ENCODE measurements at regions of chr5 and their contacts with region 1.

Region 1: DNA sequence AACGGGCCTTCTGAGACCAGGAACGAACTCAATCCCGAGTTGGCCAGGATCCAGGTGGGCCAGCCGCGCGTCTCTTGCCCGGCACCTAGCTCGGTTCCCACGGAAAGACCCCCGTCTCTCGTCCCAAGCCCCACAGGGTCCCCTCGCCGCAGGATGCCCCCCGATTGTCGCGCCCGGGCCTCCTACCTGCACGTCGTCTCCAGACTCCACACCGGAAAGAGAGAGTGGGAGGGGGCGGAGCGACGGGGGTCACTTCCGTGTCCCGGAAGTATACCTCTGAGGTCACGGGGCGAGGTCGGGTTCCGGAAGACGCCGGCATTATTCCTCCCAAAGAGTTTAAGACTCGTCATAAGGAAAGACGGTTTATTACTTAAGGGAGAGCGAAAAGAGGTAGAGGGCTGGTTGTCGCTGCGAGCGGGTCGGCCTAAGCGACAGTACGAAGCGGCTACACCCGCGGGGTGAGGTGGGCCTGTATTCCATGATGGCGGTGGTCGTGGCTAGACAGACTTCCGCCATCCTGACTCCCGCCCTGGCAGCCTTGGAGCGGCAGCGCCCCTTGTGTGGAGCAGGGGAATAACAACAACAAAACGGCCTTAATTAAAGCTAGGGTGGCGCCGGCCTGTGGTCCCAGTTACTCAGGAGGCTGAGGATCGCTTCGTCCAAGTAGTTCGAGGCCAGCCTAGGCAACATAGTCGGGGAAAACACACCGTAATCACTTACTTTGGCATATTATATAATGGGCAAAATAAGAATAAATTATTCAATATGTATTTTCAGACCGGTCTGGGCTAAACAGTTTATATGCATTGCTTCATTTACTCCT is at the start of gene RPS14:
- DNase-seq: peak; percentile 94
- H3K4me3 ChIP-seq: peak within 1 kb of the TSS; percentile 97
- H3K27ac ChIP-seq: peak within 1 kb of the TSS; percentile 80
- H3K4me1 ChIP-seq: peaks cover 20% of the 10 kb centered on the region
- CTCF ChIP-seq: peak; percentile 92
- total RNA-seq, gene RPS14: 2,281 and 2,351 TPM in 2 replicates

Region 2: DNA sequence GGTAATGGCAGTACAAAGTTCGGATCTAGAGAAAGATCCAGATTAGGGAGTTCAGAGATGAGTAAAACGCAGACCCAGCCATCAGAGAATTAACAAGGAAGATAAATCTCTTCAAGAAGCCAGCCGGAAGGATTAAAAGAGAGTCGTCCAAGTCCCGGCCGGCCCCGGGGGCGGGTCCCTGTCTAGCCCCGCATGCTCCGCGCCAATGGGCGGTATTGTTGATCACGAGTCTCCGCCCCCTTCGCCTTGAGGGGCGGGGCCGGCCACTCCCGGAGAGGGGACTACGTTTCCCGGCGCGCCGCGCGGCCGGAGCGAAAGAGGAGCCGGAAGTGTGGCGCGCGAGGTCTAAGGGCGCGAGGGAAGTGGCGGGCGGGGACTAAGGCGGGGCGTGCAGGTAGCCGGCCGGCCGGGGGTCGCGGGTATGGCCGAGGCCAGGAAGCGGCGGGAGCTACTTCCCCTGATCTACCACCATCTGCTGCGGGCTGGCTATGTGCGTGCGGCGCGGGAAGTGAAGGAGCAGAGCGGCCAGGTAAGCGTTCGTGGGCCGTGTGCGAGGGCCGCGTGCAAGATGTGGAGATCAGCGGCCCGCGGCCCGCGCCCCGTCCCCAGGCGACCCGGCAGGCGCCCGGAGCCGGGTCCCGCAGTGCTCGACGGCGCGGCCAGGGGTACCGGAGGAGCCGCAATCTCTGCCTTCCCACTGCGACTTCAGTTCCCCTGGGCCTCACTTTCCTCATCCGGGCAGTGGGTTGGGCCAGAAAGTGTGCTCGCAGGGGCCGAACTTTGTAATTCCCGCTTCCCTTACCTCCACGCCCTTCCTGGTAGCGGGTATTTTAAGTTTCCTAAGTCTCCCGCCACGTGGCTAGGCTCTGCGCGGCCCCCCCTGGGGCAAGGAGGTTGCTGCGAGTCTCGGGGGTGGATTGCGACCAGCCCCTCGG is 92.1 kb before region 1 on chr5 and contains the start of gene TCOF1:
- CTCF ChIA-PET with region 1: no interaction called
- POLR2A ChIA-PET with region 1: interaction called, 3 read pairs
- intact Hi-C with region 1: loop called (anchors 2 kb)
- DNase-seq: peak; percentile 99
- H3K4me3 ChIP-seq: peak within 1 kb of the TSS; percentile 93
- H3K27ac ChIP-seq: peak within 1 kb of the TSS; percentile 54
- H3K4me1 ChIP-seq: peaks cover 38% of the 10 kb centered on the region
- CTCF ChIP-seq: no peak
- total RNA-seq, gene TCOF1: 61.3 and 62.9 TPM in 2 replicates

Region 3: DNA sequence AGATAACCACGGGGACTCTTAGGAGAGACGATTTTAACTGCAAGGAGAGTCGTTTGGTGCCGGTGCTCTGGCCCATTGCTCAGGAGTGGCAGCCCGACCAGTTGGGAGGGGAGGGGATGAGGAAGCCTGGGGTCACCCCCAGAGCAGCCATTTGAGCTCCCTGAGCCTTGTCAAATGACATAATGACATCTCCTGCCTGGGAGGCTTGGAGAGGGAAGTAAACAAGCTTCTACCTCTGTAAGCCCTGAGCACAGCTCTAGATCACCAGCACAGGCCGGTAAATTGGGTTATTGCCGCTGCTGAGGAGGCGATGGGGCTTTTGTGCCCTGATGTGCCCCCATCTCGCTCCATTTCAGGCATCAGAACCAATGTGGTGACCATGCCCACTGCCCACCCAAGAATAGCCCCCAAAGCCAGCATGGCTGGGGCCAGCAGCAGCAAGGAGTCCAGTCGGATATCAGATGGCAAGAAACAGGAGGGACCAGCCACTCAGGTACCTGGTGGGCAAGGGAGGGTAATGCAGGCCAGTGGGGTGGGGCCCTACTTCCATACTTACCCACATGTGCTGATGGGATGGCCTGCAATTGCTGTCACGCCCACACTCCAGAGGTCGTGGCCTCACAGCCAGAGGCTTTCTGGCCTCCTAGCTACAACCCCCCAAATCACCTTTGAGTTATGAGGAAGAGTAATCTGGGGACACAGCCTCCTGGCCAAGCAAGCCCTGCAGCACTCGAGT is 60.0 kb before region 1 on chr5:
- CTCF ChIA-PET with region 1: no interaction called
- POLR2A ChIA-PET with region 1: no interaction called
- intact Hi-C with region 1: no loop called
- DNase-seq: no peak
- H3K4me3 ChIP-seq: no peak overlapping the region
- H3K27ac ChIP-seq: no peak overlapping the region
- H3K4me1 ChIP-seq: no peaks in the 10 kb centered on the region
- CTCF ChIP-seq: no peak

Region 4: GRCh38 chr5:150428106-150428876 is 21.4 kb before region 1 on chr5:
- CTCF ChIA-PET with region 1: no interaction called
- POLR2A ChIA-PET with region 1: no interaction called
- intact Hi-C with region 1: no loop called
- DNase-seq: no peak
- H3K4me3 ChIP-seq: no peak overlapping the region
- H3K27ac ChIP-seq: no peak overlapping the region
- H3K4me1 ChIP-seq: peaks cover 7% of the 10 kb centered on the region
- CTCF ChIP-seq: no peak

Region 5: GRCh38 chr5:150473673-150474358 is 24.1 kb after region 1 on chr5:
- CTCF ChIA-PET with region 1: no interaction called
- POLR2A ChIA-PET with region 1: no interaction called
- intact Hi-C with region 1: no loop called
- DNase-seq: no peak
- H3K4me3 ChIP-seq: no peak overlapping the region
- H3K27ac ChIP-seq: no peak overlapping the region
- H3K4me1 ChIP-seq: peaks cover 26% of the 10 kb centered on the region
- CTCF ChIP-seq: no peak